Psoas muscle (tissue), 8 donors: ENCODE measurements at regions of chr6 and their contacts with region 1.

Region 1: GRCh38 chr6:161498359-161498758 is 224.5 kb upstream of the AGPAT4 start:
- DNase-seq: peak in 1 of 2 donors; percentile 58
- ATAC-seq: peak; percentile 91 to 96 (median 92)
- H3K4me3 ChIP-seq: no peak overlapping the region
- H3K27ac ChIP-seq: peak overlapping the region; percentile 3
- H3K4me1 ChIP-seq: peaks cover 10% of the 10 kb centered on the region
- H3K27me3 ChIP-seq: no peaks in the 10 kb centered on the region
- CTCF ChIP-seq: peak; percentile 60

Region 2: GRCh38 chr6:161393839-161394364 is 104.5 kb before region 1 on chr6:
- intact Hi-C with region 1: loop called (anchors 2 to 5 kb)
- DNase-seq: no peak
- ATAC-seq: peak; percentile 92 to 99 (median 97)
- H3K4me3 ChIP-seq: peak overlapping the region; percentile 15
- H3K27ac ChIP-seq: no peak overlapping the region
- H3K4me1 ChIP-seq: peaks cover 10% of the 10 kb centered on the region
- H3K27me3 ChIP-seq: no peaks in the 10 kb centered on the region
- CTCF ChIP-seq: peak; percentile 79

Region 3: GRCh38 chr6:161411265-161411944 is 87.0 kb before region 1 on chr6:
- intact Hi-C with region 1: loop called (anchors 5 kb)
- DNase-seq: no peak
- ATAC-seq: no peak
- H3K4me3 ChIP-seq: no peak overlapping the region
- H3K27ac ChIP-seq: peak overlapping the region; percentile 2
- H3K4me1 ChIP-seq: peaks cover 35% of the 10 kb centered on the region
- H3K27me3 ChIP-seq: no peaks in the 10 kb centered on the region
- CTCF ChIP-seq: no peak

Region 4: GRCh38 chr6:161418463-161418945 is 79.9 kb before region 1 on chr6:
- intact Hi-C with region 1: loop called (anchors 5 kb)
- DNase-seq: no peak
- ATAC-seq: peak; percentile 62 to 81 (median 77)
- H3K4me3 ChIP-seq: no peak overlapping the region
- H3K27ac ChIP-seq: peak overlapping the region; percentile 84
- H3K4me1 ChIP-seq: peaks cover 19% of the 10 kb centered on the region
- H3K27me3 ChIP-seq: no peaks in the 10 kb centered on the region
- CTCF ChIP-seq: peak; percentile 78

Region 5: GRCh38 chr6:161522276-161522675 is 23.9 kb after region 1 on chr6:
- intact Hi-C with region 1: no loop called
- DNase-seq: no peak
- ATAC-seq: no peak
- H3K4me3 ChIP-seq: no peak overlapping the region
- H3K27ac ChIP-seq: no peak overlapping the region
- H3K4me1 ChIP-seq: no peaks in the 10 kb centered on the region
- H3K27me3 ChIP-seq: no peaks in the 10 kb centered on the region
- CTCF ChIP-seq: no peak